SK-N-SH (cell line): ENCODE measurements at regions of chr12 and their contacts with region 1.

Region 1: DNA sequence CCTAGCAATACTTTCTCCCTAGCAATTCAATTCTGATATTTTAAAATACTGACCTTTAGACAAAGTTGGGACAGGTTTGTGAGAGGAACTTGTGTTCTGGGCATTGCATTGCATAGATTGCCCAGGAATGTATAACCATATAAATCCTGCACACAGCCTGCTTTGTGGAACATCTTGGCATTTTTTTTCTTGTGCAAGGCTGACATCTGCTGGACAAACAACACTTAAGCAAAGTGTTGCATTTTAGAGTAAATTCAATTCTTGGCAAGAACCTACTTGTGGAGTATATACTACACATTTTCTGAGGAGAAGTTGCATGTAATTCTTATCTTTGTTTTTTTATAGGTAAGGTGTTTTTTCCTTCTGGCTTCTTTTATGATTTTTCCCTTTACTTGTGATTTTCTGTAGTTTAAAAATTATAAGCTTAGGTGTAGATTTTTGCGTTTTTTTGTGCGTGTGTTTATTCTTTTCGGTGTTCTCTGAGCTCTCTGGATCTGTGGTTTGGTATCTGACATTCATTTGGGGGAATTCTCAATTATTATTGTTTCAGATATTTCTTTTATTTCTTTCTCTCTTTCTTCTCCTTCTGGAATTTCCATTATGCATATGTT is 26.4 kb downstream of the TESPA1 start:
- DNase-seq: peak; percentile 26
- H3K4me3 ChIP-seq: no peak overlapping the region
- H3K27ac ChIP-seq: no peak overlapping the region
- H3K4me1 ChIP-seq: no peaks in the 10 kb centered on the region
- H3K27me3 ChIP-seq: peaks cover 39% of the 10 kb centered on the region; the same call in 1 of the 2 replicates
- CTCF ChIP-seq: peak; percentile 78
- EP300 ChIP-seq: no peak
- RAD21 ChIP-seq: peak; percentile 83

Region 2: GRCh38 chr12:54749191-54749818 is 208.8 kb before region 1 on chr12:
- CTCF ChIA-PET with region 1: interaction called, 55 read pairs
- POLR2A ChIA-PET with region 1: no interaction called
- DNase-seq: peak; percentile 23
- H3K4me3 ChIP-seq: peak overlapping the region in 1 of 2 experiments; percentile 31; a peak in 1 of 4 replicates
- H3K27ac ChIP-seq: no peak overlapping the region
- H3K4me1 ChIP-seq: no peaks in the 10 kb centered on the region
- H3K27me3 ChIP-seq: no peaks in the 10 kb centered on the region
- CTCF ChIP-seq: peak; percentile 89
- EP300 ChIP-seq: no peak
- RAD21 ChIP-seq: peak; percentile 75

Region 3: GRCh38 chr12:55607821-55608594 is 649.9 kb after region 1 on chr12:
- CTCF ChIA-PET with region 1: no interaction called
- POLR2A ChIA-PET with region 1: no interaction called
- DNase-seq: no peak
- H3K4me3 ChIP-seq: no peak overlapping the region
- H3K27ac ChIP-seq: no peak overlapping the region
- H3K4me1 ChIP-seq: no peaks in the 10 kb centered on the region
- H3K27me3 ChIP-seq: no peaks in the 10 kb centered on the region
- CTCF ChIP-seq: no peak
- EP300 ChIP-seq: no peak
- RAD21 ChIP-seq: no peak